ENCODE measurements at regions of chr3 and their contacts with region 1.

Region 1: DNA sequence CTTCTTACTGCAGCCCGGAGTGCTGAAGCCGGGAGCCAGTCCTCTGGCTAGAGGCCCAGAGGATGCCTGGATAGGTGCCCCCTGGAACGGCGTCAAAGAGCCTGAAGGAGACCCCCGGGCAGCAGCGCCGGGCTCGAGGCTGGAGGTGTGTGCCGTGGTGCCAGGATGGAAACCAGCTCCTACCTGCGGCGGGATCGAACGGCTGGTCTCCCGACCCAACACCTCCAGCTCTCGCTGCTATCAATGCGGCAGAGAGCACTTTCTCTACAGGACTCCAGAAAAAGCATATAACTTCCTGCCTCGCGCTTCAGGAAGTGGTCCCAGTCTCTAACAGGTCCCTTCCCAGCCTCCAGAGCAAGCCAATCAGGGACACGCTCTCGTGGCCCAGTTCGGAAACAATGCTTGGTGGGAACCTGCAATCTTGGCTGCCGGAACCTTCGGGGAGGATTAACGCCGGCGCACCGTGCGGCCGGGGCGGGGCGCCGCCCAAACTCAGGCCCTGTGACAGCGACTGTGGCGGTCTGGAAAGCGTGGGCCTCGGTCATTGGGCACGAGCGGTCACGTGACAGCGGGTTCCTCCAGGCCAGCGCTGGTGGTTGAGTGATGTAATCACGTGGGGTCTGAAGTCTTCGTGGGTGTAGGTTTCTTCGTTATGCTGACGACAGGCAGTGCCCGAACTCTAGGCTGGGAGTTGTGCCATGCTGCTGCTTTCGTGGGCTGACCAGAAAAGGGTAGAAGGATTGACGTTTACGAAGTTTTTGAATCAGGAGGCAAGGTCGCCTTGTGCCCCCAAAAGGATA is at the start of gene SLC33A1:
- DNase-seq: peak; percentile 99
- H3K4me3 ChIP-seq: peak within 1 kb of the TSS; percentile 98
- H3K27ac ChIP-seq: peak within 1 kb of the TSS; percentile 61
- H3K4me1 ChIP-seq: peaks cover 23% of the 10 kb centered on the region
- CTCF ChIP-seq: no peak
- total RNA-seq, gene SLC33A1: 20.9 and 21.9 TPM in 2 replicates

Region 2: DNA sequence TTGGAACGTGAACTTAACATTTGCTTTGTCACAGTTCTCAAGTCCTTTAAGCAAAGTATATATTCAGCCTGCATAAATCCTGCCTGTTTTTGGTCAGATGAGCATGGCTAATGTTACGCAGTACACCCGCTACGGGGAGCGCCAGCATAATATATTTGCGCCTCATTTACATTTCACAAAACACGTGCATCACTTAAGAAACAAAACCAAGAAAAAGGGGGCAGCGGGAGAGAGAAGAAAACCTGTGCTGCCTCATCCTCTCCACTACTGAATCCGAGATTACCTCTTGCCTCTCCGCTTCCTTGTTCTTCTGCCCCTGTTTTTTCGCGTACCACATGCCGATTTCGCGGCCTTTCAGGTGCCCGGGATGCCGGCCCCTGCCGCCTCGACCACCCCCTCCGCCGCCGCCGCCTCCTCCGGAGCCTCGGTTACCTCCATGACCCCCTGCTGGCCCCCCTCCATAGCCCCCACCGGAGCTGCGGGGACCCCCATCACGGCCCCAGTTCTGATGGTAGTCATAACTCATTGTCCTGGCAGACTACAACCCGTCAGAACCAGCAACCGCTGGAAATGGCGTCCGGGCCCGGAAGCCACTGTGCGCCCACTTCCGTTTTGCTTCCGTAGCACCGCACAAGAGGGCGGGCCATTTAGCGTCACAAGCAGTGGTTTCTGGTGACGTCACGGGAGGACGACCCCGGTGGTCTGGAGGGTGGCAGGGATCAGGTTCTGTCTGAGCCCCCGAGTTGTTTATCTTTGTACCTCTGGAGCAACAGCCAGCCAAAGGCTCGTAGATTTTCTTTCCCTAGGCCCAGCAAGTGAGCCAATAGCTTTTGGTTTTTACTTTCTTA is 1530.2 kb before region 1 on chr3 and contains the start of gene DHX36:
- CTCF ChIA-PET with region 1: no interaction called
- POLR2A ChIA-PET with region 1: interaction called, 3 read pairs
- intact Hi-C with region 1: loop called (anchors 10 kb)
- DNase-seq: peak; percentile 93
- H3K4me3 ChIP-seq: peak within 1 kb of the TSS; percentile 85
- H3K27ac ChIP-seq: peak within 1 kb of the TSS; percentile 75
- H3K4me1 ChIP-seq: peaks cover 46% of the 10 kb centered on the region
- CTCF ChIP-seq: no peak; the same call in 1 of the 2 replicates
- total RNA-seq, gene DHX36: 40.6 and 48.1 TPM in 2 replicates

Region 3: GRCh38 chr3:155744626-155745324 is 109.6 kb before region 1 on chr3 and contains the start of gene PLCH1:
- CTCF ChIA-PET with region 1: no interaction called
- POLR2A ChIA-PET with region 1: no interaction called
- intact Hi-C with region 1: no loop called
- DNase-seq: peak; percentile 44
- H3K4me3 ChIP-seq: peak within 1 kb of the TSS; percentile 66
- H3K27ac ChIP-seq: no peak within 1 kb of the TSS
- H3K4me1 ChIP-seq: peaks cover 9% of the 10 kb centered on the region
- CTCF ChIP-seq: no peak
- total RNA-seq, gene PLCH1: 0.06 TPM in 1 of 2 replicates, not detected in the other

Region 4: DNA sequence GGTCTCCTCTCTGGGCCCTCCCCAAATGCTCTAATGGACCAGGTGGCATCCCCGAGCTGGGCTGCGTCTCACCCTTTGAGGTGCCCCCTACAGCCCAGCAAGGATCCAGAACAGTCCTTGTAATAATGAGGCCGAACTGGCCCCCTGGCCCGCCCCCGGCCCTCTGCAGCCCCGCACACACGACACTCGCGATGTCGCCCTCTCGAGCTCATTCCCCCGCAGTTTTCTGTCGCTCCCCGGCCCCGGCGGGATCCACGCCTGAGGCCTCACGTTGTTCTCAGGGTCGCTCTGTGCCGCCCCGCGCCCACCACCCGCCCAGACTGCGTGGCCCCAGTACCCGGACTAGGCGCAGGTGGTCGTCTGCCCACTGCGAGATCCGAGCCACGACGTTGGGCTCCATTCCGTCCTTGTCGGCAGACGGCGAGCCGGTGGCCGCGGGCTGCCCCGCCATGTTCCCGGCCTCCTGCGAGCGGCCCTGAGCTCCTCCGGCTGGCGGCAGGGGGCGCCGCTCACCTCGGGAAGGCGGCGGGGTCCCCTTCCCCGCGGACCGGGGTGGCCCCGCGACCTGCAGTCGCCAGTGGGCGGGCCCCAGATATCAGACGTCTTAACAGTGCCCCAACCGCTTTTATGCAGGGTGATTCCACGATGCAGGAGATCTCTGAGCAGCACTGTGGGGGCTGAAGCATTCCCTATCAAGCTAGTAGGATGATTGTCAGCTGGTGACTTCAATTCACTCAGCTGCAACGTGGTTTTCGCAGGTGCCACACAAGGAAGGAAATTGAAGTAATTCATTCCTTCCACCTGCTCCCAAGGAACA is 48.3 kb before region 1 on chr3 and contains the start of gene C3orf33:
- CTCF ChIA-PET with region 1: no interaction called
- POLR2A ChIA-PET with region 1: interaction called, 4 read pairs
- intact Hi-C with region 1: loop called (anchors 2 kb)
- DNase-seq: peak; percentile 62
- H3K4me3 ChIP-seq: peak within 1 kb of the TSS; percentile 71
- H3K27ac ChIP-seq: no peak within 1 kb of the TSS
- H3K4me1 ChIP-seq: no peaks in the 10 kb centered on the region
- CTCF ChIP-seq: peak; percentile 77
- total RNA-seq, gene C3orf33: 0.38 and 0.49 TPM in 2 replicates

Region 5: DNA sequence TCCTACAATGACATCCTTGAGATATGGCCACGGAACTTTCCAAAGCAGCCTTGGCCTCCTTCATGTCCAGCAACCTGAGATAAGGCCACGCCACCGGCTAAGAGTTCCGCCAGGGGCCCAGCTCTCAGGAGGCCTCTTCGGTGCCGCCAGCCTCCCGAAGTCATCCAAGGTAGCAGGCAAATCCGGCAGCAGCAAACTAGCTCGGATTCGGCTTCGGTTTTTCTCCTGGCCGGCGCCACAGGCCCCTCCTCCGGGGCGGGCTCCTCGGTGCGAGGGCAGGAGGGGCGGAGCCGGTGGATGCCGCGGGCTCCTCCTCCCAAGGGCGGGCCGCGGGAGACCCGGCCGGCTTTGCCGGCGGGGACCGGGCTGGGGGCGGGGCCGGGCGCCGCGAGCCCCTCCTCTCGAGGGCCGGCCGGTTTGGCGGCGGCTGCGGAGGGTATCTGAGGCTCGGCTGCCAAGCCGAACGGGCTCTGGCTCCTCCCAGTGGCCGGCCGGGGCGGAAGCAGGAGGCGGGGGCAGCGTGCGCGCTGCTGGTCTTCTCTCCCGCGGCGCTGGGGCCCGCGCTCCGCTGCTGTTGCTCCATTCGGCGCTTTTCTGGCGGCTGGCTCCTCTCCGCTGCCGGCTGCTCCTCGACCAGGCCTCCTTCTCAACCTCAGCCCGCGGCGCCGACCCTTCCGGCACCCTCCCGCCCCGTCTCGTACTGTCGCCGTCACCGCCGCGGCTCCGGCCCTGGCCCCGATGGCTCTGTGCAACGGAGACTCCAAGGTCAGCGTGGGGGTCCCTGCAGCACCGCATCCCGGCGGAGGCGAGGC is 16.0 kb after region 1 on chr3 and contains the start of gene GMPS:
- CTCF ChIA-PET with region 1: no interaction called
- POLR2A ChIA-PET with region 1: interaction called, 16 read pairs
- intact Hi-C with region 1: loop called (anchors 1 kb)
- DNase-seq: peak; percentile 95
- H3K4me3 ChIP-seq: peak within 1 kb of the TSS; percentile 88
- H3K27ac ChIP-seq: peak within 1 kb of the TSS; percentile 81
- H3K4me1 ChIP-seq: peaks cover 23% of the 10 kb centered on the region
- CTCF ChIP-seq: peak; percentile 37; the same call in 1 of the 2 replicates
- total RNA-seq, gene GMPS: 32.3 and 37.6 TPM in 2 replicates

Region 6: DNA sequence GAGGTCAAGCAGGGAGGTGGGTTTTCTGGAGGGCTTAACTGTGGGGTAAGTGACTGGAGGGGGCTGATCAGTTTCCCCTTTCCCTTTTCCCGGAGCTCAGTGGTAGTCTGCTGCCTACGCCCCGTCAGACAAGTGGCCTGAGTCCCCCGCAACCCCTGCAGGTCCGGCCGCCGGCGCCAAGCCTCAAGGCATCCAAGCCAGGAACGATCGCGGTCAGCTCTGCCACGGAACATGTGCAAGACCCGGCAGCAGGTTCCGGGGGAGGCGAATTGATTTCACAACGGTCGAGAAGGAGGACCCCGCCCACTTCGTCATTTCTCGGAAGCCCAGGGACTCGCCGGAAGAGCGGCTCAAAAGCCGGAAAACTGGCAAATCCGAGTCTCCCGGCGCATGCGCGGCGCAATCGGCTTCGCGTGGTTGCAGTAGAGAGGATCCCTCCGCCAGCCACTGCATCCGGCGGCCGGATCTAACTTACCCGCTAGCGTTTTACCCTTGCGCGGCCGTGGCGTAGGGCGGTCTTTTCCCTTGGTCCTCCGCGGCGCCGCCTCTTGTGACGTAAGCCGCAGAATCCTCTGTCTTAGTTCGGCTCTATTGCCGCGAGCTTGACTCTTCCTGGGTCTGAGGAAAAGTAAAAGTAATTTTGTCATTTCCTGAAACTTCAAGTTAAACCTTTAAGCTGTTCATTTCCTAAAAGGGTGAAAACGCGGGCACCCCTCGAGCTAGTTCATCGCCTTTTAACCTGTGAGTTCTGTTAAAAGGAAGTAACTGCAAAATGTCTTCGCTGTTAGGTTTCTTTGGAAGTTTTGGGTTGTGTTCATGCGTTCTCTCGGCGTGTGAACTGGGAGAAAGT is 1320.5 kb after region 1 on chr3:
- CTCF ChIA-PET with region 1: no interaction called
- POLR2A ChIA-PET with region 1: no interaction called
- intact Hi-C with region 1: loop called (anchors 10 kb)
- DNase-seq: peak; percentile 100
- H3K4me3 ChIP-seq: peak overlapping the region; percentile 88
- H3K27ac ChIP-seq: peak overlapping the region; percentile 86
- H3K4me1 ChIP-seq: peaks cover 26% of the 10 kb centered on the region
- CTCF ChIP-seq: no peak